ENCODE measurements at regions of chr2 and their contacts with region 1.

Region 1: DNA sequence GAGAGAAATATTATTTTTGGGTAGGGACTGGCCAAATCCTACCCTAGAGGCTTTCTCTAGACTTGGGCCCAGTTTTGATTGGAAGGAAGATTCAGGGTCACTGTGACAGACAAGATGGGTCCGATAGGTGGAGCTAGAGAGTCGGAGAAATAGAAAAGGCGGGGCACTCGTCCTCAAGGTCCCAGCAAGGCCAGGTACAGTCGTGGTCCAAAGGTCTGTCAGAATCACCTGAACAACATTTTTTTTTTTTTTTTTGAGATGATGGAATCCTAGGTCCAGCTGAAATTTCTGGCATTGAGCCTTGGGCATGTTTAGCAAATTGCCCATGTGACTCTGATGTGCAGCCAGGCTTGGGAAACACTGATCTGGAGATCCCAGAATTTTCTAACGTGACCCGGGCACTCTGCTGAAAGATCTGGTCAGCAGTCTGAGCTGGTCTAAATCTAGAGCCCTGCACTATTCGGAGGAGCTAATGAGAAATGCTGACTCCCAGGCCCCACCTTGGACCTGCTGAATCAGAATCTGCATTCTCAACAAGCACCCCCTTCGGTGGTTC is 23.0 kb upstream of the NTSR2 start:
- DNase-seq: no peak
- H3K4me3 ChIP-seq: no peak overlapping the region
- H3K27ac ChIP-seq: no peak overlapping the region
- H3K4me1 ChIP-seq: peaks cover 39% of the 10 kb centered on the region
- H3K27me3 ChIP-seq: no peaks in the 10 kb centered on the region
- CTCF ChIP-seq: peak; percentile 87

Region 2: GRCh38 chr2:11743846-11744553 is 51.0 kb after region 1 on chr2:
- intact Hi-C with region 1: loop called (anchors 10 kb)
- DNase-seq: peak; percentile 94
- H3K4me3 ChIP-seq: peak overlapping the region; percentile 39
- H3K27ac ChIP-seq: peak overlapping the region; percentile 93
- H3K4me1 ChIP-seq: peaks cover 61% of the 10 kb centered on the region
- H3K27me3 ChIP-seq: no peaks in the 10 kb centered on the region
- CTCF ChIP-seq: no peak

Region 3: DNA sequence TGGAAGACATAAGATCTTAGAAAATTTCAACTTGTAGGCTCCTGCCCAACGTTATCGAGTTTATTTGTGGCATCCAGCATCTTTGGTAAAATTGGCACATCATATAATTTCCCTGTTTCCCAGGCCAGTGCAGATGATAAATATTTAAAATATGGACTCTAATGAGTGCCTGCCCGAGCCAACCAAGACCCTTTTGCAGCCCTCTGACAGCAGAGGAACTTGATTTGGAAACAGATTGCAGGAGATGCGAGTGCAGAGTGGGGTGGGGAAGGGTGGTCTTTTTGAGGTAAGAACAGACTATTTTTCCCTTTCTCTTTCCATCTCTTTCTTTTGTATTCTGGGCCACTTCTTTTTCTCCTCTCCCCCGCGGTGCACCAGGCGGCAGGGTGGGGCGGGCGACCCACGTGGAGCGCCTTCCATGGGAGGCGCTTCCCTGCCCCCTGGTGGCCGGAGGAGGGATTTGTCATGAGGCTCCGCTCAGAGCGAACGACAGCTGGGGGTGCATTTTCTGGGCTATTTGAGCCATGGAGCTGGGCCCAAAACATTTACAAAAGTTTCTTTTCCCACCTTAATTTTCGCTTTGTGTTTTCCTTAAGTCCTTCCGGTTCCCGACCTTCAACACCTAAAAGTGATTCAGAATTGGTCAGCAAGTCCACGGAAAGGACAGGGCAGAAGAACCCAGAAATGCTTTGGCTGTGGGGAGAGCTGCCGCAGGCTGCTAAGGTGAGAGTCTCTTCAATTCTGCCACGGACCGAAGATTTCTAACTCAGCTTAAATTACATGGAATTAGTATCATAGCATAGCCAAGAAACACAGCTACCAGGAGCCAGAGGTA is 86.1 kb after region 1 on chr2:
- intact Hi-C with region 1: loop called (anchors 5 kb)
- DNase-seq: peak; percentile 78
- H3K4me3 ChIP-seq: peak overlapping the region; percentile 33
- H3K27ac ChIP-seq: no peak overlapping the region
- H3K4me1 ChIP-seq: peaks cover 27% of the 10 kb centered on the region
- H3K27me3 ChIP-seq: no peaks in the 10 kb centered on the region
- CTCF ChIP-seq: peak; percentile 97

Region 4: GRCh38 chr2:11980809-11981208 is 287.8 kb after region 1 on chr2:
- intact Hi-C with region 1: no loop called
- DNase-seq: no peak
- H3K4me3 ChIP-seq: no peak overlapping the region
- H3K27ac ChIP-seq: no peak overlapping the region
- H3K4me1 ChIP-seq: no peaks in the 10 kb centered on the region
- H3K27me3 ChIP-seq: no peaks in the 10 kb centered on the region
- CTCF ChIP-seq: no peak

Measured in left ventricle myocardium inferior (tissue), 1 donor.